Stomach (tissue), 19 donors: ENCODE measurements at regions of chr9 and their contacts with region 1.

Region 1: DNA sequence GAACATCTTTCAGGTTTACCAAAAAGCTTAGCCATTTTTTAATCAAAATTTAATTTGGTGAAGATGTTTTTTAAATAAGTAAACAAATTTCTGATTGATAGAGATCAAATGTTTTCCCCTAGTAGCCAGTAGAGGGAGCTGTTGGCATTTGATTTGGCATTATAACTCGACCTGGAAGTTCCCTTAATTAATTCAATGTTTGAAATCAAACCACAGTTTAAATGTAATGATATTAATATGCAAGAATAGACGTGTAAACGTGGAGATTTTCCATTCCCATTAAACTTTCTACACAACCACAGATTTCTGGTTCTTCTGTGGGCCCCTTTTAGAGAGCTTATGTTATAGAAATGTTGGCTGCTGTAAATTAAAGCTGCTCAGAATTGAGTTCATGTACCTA is 148.1 kb upstream of the MPDZ start:
- DNase-seq: peak in 1 of 2 donors; percentile 80
- H3K4me3 ChIP-seq: no peak overlapping the region
- H3K27ac ChIP-seq: no peak overlapping the region
- H3K4me1 ChIP-seq: peaks cover 0 to 4% (median 3%) of the 10 kb centered on the region in 4 donors
- H3K27me3 ChIP-seq: no peaks in the 10 kb centered on the region
- CTCF ChIP-seq: peak in 4 of 7 experiments; percentile 41 to 76 (median 62)
- EP300 ChIP-seq: no peak
- POLR2A ChIP-seq: no peak

Region 2: DNA sequence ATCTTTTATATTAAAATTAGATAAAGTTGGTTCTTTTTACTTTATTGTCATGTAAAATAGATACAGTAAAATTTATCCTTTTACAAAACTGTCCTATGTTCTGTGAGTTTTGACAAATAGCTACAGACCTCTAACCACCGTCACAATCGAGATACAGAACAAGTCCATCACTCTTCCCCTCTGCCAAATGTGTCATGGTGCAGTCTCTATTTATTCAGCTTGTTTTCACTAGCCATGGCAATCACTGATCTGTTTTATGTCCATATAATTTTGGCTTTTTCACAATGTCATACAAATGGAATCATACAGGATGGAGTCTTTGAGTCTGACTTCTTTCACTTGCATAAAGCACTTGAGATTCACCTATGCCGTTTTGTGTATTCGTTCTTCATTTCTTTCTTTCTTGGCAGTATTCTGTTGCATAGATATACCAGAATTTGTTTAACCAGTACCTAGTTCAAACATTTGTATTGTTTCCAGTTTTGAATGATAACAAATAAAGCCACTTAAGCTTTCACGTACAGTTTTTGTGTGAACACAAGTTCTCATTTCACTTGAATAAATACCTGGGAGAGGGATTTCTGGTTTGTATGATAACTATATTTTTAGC is 125.1 kb after region 1 on chr9:
- intact Hi-C with region 1: no loop called
- DNase-seq: peak in 1 of 2 donors; percentile 16
- H3K4me3 ChIP-seq: no peak overlapping the region
- H3K27ac ChIP-seq: no peak overlapping the region
- H3K4me1 ChIP-seq: no peaks in the 10 kb centered on the region
- H3K27me3 ChIP-seq: no peaks in the 10 kb centered on the region
- CTCF ChIP-seq: no peak
- EP300 ChIP-seq: no peak
- POLR2A ChIP-seq: no peak

Region 3: DNA sequence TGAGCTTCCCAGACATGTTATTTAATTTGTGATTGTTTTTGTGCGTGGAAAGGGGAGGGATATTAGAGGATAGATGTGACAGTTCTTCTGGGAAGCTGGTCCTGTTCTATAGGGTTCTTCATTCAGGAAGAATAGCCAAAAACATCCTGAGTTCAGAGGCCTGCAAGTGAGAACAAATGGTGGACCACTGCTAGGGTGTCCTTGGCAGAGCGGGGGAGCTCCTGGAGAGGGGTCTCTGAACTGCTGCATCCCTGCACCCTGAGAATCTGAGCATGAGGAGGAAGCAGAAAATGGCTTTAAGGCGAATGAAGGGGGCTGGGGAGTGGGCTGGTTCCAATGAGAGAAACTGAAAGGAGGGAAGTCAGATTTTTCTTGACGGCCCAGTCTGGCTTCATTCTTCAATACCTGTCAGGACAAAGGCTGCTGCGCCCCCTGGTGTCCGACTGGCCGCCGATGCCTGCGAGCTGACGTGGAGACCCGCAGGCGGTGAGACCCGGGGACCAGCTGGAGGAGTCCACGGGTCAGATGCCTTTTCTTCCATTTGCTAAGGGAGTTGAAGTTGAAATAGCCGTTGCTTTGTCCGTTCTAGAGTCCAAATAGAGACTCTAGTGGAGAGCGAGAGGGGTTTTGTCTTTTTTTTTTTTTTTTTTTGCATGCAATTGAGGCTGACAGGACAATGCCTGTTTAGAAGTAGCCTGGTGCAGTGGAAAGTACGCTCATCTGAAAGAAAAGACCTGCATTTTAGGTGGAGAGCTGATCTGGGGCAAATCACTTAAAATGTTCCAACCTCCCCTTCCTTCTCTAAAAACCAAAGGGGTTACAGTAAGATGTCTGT is 925.9 kb after region 1 on chr9:
- intact Hi-C with region 1: loop called (anchors 5 kb)
- DNase-seq: peak; percentile 95 to 96
- H3K4me3 ChIP-seq: peak overlapping the region in 2 of 4 donors; percentile 6 to 10
- H3K27ac ChIP-seq: peak overlapping the region in 1 of 5 donors; percentile 33
- H3K4me1 ChIP-seq: peaks cover 8 to 36% (median 29%) of the 10 kb centered on the region in 4 donors
- H3K27me3 ChIP-seq: peaks cover 0 to 31% (median 26%) of the 10 kb centered on the region in 3 donors
- CTCF ChIP-seq: peak in 5 of 7 experiments; percentile 81 to 92 (median 88)
- EP300 ChIP-seq: no peak
- POLR2A ChIP-seq: no peak

Region 4: GRCh38 chr9:14400658-14400995 is 973.0 kb after region 1 on chr9:
- intact Hi-C with region 1: loop called (anchors 10 kb)
- DNase-seq: peak; percentile 31 to 82
- H3K4me3 ChIP-seq: no peak overlapping the region
- H3K27ac ChIP-seq: no peak overlapping the region
- H3K4me1 ChIP-seq: peaks cover 0 to 16% (median 7%) of the 10 kb centered on the region in 4 donors
- H3K27me3 ChIP-seq: no peaks in the 10 kb centered on the region
- CTCF ChIP-seq: peak in 4 of 7 experiments; percentile 15 to 61 (median 33)
- EP300 ChIP-seq: no peak
- POLR2A ChIP-seq: no peak